Sigmoid colon (tissue), 7 donors: ENCODE measurements at regions of chr1 and their contacts with region 1.

Region 1: GRCh38 chr1:64136752-64137411 is 66.5 kb upstream of the UBE2U start:
- DNase-seq: peak; percentile 88
- H3K4me3 ChIP-seq: no peak overlapping the region
- H3K27ac ChIP-seq: peak overlapping the region in 2 of 4 donors; percentile 10 to 34
- H3K4me1 ChIP-seq: peaks cover 0 to 24% (median 19%) of the 10 kb centered on the region in 4 donors
- H3K27me3 ChIP-seq: no peaks in the 10 kb centered on the region
- CTCF ChIP-seq: peak; percentile 79 to 88 (median 86)
- EP300 ChIP-seq: no peak
- POLR2A ChIP-seq: no peak

Region 2: GRCh38 chr1:63615768-63616420 is 521.0 kb before region 1 on chr1:
- intact Hi-C with region 1: loop called (anchors 2 kb)
- DNase-seq: peak; percentile 73
- H3K4me3 ChIP-seq: no peak overlapping the region
- H3K27ac ChIP-seq: no peak overlapping the region
- H3K4me1 ChIP-seq: peaks cover 0 to 17% (median 4%) of the 10 kb centered on the region in 4 donors
- H3K27me3 ChIP-seq: no peaks in the 10 kb centered on the region
- CTCF ChIP-seq: peak; percentile 48 to 77 (median 72)
- EP300 ChIP-seq: no peak
- POLR2A ChIP-seq: no peak

Region 3: DNA sequence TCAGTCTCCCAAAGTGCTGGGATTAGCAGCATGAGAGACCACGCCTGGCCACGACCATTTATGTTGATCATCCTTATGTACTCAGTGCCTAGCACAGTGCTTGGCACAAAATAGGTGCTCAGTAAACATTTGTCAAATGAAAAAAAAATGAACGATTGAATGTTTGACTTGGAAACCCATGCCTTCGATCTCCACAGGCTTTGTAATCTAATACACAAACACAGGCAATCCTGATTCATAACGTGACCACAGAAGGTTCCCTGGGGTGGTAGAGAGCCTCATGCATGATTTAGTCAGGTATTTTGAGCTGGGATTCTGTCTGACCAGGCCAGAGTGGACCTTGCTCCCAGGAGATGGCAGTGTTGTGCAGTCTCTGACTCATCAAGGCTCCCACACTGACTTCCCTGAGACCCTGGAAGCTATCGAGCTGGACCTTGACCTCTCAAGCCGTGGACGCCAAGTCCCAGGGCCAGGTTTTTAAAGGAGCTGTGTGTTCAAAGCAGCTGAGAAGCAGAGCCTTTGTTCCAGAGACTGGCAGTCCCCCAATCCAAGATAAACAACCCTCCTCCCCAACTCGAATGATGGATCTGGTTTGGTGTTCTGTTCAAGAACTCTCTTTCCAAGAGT is 462.5 kb before region 1 on chr1:
- intact Hi-C with region 1: loop called (anchors 1 kb)
- DNase-seq: peak; percentile 96
- H3K4me3 ChIP-seq: no peak overlapping the region
- H3K27ac ChIP-seq: peak overlapping the region in 3 of 4 donors; percentile 1 to 61 (median 56)
- H3K4me1 ChIP-seq: peaks cover 0 to 19% (median 12%) of the 10 kb centered on the region in 4 donors
- H3K27me3 ChIP-seq: no peaks in the 10 kb centered on the region
- CTCF ChIP-seq: peak; percentile 57 to 70 (median 68)
- EP300 ChIP-seq: no peak
- POLR2A ChIP-seq: no peak

Region 4: GRCh38 chr1:63691701-63692425 is 445.0 kb before region 1 on chr1:
- intact Hi-C with region 1: loop called (anchors 1 kb)
- DNase-seq: peak; percentile 84
- H3K4me3 ChIP-seq: no peak overlapping the region
- H3K27ac ChIP-seq: peak overlapping the region in 3 of 4 donors; percentile 57 to 74 (median 60)
- H3K4me1 ChIP-seq: peaks cover 0 to 30% (median 20%) of the 10 kb centered on the region in 4 donors
- H3K27me3 ChIP-seq: no peaks in the 10 kb centered on the region
- CTCF ChIP-seq: peak; percentile 62 to 82 (median 68)
- EP300 ChIP-seq: peak in 1 of 4 donors; percentile 38
- POLR2A ChIP-seq: no peak

Region 5: DNA sequence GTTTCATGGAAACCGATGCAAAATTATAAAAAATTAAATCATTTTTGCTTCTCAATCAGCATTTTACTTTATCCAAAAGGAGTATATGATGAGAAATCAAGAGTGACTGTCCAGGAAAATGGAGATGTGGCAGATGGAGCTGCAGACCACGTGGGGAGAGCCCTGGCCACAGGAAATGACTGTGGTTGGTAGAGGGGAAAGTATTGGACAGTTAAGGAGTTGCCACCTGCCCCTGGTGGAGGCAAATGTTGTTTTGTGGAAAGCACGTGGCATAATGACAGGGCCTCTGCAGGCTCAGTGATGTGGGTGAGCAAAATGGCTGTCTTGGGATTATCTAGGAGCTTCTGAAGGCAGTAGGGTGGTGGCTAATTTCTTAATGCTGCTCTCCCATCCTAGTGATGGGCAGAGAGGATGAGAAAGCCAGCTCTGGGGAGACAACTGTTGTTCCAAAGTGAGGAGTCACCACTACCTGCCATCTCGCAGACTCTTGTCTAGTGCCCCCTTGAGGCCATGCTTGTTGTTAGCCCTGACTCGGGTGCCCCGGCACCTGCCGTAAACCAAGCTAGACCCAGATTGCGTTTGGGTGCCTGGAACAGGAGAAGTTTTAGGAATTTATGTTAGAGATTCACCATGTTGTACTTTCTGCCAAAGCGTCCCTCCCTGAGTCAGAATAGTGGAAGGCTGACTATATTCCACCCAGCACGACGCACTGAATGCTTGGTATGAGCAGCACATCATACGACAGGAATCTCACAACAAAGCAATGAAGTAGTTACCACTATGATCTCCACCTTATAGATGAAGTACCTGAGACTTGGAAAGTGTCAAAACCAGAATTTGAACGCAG is 219.1 kb before region 1 on chr1:
- intact Hi-C with region 1: loop called (anchors 5 kb)
- DNase-seq: no peak
- H3K4me3 ChIP-seq: no peak overlapping the region
- H3K27ac ChIP-seq: no peak overlapping the region
- H3K4me1 ChIP-seq: peaks cover 0 to 52% (median 43%) of the 10 kb centered on the region in 4 donors
- H3K27me3 ChIP-seq: no peaks in the 10 kb centered on the region
- CTCF ChIP-seq: peak in 1 of 4 experiments; percentile 9
- EP300 ChIP-seq: no peak
- POLR2A ChIP-seq: no peak

Region 6: DNA sequence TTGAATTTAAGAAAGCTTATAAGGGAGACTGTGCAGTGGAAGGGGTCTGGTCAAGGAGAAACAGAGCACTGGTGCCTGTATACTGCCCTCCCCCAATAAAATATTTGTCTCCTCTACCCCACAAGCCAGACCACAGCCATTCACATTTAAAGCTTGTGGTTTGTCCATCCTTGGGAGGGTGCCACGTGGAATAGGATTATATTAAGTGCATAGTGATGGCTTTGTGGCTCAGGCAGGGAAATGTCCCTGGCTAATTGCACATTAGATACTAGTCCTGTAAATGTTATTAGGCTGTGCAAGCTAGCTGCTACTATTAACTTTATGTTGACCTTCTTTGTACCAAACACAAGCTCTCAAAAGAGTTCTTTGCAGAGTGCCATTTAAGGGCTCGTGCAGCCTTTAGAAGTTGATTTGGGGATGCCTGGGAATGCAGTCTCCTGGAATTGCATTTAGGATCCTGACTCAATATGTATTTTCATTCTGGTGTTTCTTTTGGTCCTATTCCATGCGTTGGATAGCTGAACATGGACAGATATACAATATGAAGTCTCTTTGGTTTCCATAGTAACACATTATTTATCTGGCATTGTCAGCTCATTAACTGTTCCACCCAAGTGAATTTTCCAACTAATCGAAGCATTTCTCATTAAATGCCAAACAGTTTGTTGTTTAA is 152.5 kb before region 1 on chr1:
- intact Hi-C with region 1: no loop called
- DNase-seq: no peak
- H3K4me3 ChIP-seq: no peak overlapping the region
- H3K27ac ChIP-seq: no peak overlapping the region
- H3K4me1 ChIP-seq: peaks cover 0 to 30% (median 21%) of the 10 kb centered on the region in 4 donors
- H3K27me3 ChIP-seq: no peaks in the 10 kb centered on the region
- CTCF ChIP-seq: no peak
- EP300 ChIP-seq: no peak
- POLR2A ChIP-seq: no peak

Region 7: GRCh38 chr1:64031236-64031635 is 105.6 kb before region 1 on chr1:
- intact Hi-C with region 1: no loop called
- DNase-seq: no peak
- H3K4me3 ChIP-seq: no peak overlapping the region
- H3K27ac ChIP-seq: no peak overlapping the region
- H3K4me1 ChIP-seq: peaks cover 0 to 14% (median 3%) of the 10 kb centered on the region in 4 donors
- H3K27me3 ChIP-seq: no peaks in the 10 kb centered on the region
- CTCF ChIP-seq: no peak
- EP300 ChIP-seq: no peak
- POLR2A ChIP-seq: no peak

Region 8: GRCh38 chr1:64242895-64243756 is 106.2 kb after region 1 on chr1:
- intact Hi-C with region 1: loop called (anchors 2 kb)
- DNase-seq: no peak
- H3K4me3 ChIP-seq: no peak overlapping the region
- H3K27ac ChIP-seq: no peak overlapping the region
- H3K4me1 ChIP-seq: peaks cover 0 to 3% (median 0%) of the 10 kb centered on the region in 4 donors
- H3K27me3 ChIP-seq: no peaks in the 10 kb centered on the region
- CTCF ChIP-seq: peak in 3 of 4 experiments; percentile 29 to 62 (median 45)
- EP300 ChIP-seq: no peak
- POLR2A ChIP-seq: no peak